Calu3 (cell line): ENCODE measurements at regions of chr3 and their contacts with region 1.

Region 1: GRCh38 chr3:189132231-189132707 is 39.5 kb upstream of the TPRG1 start:
- DNase-seq: peak; percentile 63
- H3K4me3 Mint-ChIP-seq: peak overlapping the region; percentile 3
- H3K27ac Mint-ChIP-seq: peak overlapping the region; percentile 66
- H3K4me1 Mint-ChIP-seq: peaks cover 19% of the 10 kb centered on the region
- H3K27me3 Mint-ChIP-seq: no peaks in the 10 kb centered on the region
- CTCF ChIP-seq: no peak

Region 2: GRCh38 chr3:189092547-189092946 is 39.7 kb before region 1 on chr3:
- CTCF ChIA-PET with region 1: no interaction called
- intact Hi-C with region 1: loop called (anchors 1 kb)
- DNase-seq: no peak
- H3K4me3 Mint-ChIP-seq: no peak overlapping the region
- H3K27ac Mint-ChIP-seq: no peak overlapping the region
- H3K4me1 Mint-ChIP-seq: no peaks in the 10 kb centered on the region
- H3K27me3 Mint-ChIP-seq: peaks cover 19% of the 10 kb centered on the region
- CTCF ChIP-seq: no peak